Endothelial cell of umbilical vein (primary cell): ENCODE measurements at regions of chr1 and their contacts with region 1.

Region 1: GRCh38 chr1:41812051-41812450 is 106.7 kb downstream of the HIVEP3 start:
- DNase-seq: peak; percentile 72
- H3K4me3 ChIP-seq: no peak overlapping the region
- H3K27ac ChIP-seq: peak overlapping the region; percentile 95
- H3K4me1 ChIP-seq: peaks cover 17% of the 10 kb centered on the region
- H3K27me3 ChIP-seq: no peaks in the 10 kb centered on the region
- CTCF ChIP-seq: peak; percentile 75 to 82
- POLR2A ChIP-seq: no peak

Region 2: DNA sequence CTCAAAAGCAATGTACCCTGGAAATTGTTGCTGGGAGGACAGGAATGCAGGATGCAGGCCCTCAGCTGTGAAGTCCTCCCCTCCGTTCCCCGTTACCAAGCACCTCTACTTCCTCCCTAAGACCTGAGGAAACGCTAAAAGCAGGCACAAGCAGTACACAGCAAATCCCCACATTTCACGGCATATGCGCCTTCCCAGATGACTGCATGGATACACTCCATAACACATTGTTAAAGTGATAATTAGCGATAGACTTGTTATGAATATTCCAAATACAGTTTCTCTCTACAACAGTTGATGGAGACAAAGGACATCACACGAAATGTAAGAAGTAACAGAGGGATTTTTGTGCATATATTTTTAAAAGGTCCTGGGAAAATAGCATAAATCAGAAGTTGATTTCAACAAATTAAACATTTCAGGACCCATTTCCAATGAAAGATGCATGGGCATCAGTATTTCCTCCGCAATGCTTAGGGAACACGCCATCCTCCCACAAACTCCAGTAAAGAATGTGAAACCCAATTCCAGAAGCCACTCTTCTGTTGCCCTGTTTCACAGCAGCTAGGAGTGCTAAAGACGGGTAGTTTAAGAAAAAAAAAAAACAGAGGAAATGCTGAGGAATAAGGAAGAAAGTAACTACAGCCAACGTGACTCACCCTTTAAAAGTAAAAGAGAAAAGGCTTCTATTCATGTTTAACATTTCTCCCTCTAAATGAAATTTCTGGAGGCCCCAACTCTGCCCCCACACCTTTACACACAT is 31.1 kb after region 1 on chr1:
- CTCF ChIA-PET with region 1: interaction called, 4 read pairs
- POLR2A ChIA-PET with region 1: no interaction called
- dilution Hi-C with region 1: no loop called
- intact Hi-C with region 1: loop called (anchors 1 kb)
- DNase-seq: peak; percentile 52
- H3K4me3 ChIP-seq: no peak overlapping the region
- H3K27ac ChIP-seq: no peak overlapping the region
- H3K4me1 ChIP-seq: peaks cover 43% of the 10 kb centered on the region
- H3K27me3 ChIP-seq: no peaks in the 10 kb centered on the region
- CTCF ChIP-seq: no peak
- POLR2A ChIP-seq: no peak

Region 3: DNA sequence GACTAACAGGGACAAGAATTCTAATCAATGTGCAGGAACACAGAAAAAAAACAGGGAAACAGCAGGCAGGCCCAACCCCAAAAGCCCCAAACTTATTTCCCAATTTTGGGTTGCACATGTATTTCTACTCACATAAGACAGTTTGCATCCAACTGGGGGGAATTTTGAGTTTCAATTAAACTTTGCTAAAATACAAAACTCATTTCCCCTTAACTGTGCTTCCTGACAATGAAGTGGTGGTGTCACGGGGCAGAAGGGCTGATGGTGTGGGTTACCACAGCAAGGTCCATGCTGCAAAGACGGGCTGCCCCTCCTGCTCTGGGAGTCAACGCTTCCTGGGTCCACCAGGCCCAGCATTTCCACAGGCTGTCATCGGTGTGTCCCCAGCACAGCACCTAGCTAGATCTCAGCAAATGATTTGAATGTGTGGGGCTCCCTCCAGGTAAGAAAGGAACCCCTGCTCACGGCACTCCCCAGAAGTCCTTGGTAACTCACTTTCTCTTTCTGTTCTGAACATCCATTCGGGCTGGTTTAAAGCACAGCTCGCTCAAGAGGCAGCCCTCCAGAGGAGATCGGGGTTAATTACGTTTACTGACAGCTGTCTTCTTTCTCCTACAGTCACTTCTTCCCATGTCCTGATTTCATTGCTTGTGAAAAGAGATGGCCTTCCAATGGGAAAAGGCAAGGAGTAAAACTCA is 79.3 kb after region 1 on chr1:
- CTCF ChIA-PET with region 1: interaction called, 22 read pairs
- POLR2A ChIA-PET with region 1: no interaction called
- dilution Hi-C with region 1: no loop called
- intact Hi-C with region 1: loop called (anchors 1 kb)
- DNase-seq: peak; percentile 62
- H3K4me3 ChIP-seq: peak overlapping the region in 2 of 3 experiments; percentile 4 to 5
- H3K27ac ChIP-seq: peak overlapping the region; percentile 6
- H3K4me1 ChIP-seq: peaks cover 17% of the 10 kb centered on the region
- H3K27me3 ChIP-seq: no peaks in the 10 kb centered on the region
- CTCF ChIP-seq: peak; percentile 8 to 10
- POLR2A ChIP-seq: no peak

Region 4: DNA sequence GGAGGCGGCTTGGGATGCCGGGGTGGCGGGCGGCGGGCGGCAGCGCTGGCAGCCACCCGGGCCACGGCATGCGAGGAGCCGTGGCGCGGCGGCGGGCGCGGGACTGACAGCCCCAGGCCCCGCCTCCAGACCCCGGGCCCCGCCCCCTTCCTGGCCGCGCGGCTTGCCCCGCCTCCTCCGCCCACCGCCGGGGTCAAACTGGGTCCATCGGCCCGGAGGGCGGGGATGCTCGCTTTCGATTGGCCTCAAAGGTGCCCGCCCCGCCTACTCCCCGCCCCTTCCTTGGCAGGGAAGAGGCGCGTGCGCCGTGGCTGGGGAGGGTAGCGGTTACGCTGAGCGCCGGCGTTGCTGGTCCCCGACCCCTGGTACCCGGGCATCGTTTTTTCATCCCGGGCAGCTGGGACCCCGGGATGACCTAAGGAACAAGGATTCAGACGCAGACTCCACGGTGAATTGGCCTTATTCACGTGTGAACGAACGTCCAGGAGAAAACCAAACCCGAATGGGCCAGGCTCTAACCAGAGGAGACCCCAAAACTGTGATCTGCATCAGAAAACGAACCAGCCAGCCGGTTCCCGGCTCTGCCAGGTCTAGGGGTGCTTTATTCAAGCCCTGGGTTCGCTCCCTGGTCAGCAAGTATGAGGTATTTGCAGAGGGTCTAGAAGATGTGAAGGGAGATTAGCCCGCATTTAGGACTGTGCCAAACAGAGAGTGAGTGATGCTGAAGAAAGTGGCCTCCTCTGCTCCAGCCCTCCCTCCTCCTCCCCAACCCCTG is 224.0 kb after region 1 on chr1:
- CTCF ChIA-PET with region 1: interaction called, 14 read pairs
- POLR2A ChIA-PET with region 1: no interaction called
- dilution Hi-C with region 1: no loop called
- intact Hi-C with region 1: loop called (anchors 1 kb)
- DNase-seq: peak; percentile 90
- H3K4me3 ChIP-seq: peak overlapping the region; percentile 2 to 85 (median 85)
- H3K27ac ChIP-seq: no peak overlapping the region
- H3K4me1 ChIP-seq: peaks cover 13% of the 10 kb centered on the region
- H3K27me3 ChIP-seq: peaks cover 4 to 6% of the 10 kb centered on the region in 2 experiments
- CTCF ChIP-seq: no peak
- POLR2A ChIP-seq: peak; percentile 27